Prostate gland (tissue), 2 donors: ENCODE measurements at regions of chr9 and their contacts with region 1.

Region 1: DNA sequence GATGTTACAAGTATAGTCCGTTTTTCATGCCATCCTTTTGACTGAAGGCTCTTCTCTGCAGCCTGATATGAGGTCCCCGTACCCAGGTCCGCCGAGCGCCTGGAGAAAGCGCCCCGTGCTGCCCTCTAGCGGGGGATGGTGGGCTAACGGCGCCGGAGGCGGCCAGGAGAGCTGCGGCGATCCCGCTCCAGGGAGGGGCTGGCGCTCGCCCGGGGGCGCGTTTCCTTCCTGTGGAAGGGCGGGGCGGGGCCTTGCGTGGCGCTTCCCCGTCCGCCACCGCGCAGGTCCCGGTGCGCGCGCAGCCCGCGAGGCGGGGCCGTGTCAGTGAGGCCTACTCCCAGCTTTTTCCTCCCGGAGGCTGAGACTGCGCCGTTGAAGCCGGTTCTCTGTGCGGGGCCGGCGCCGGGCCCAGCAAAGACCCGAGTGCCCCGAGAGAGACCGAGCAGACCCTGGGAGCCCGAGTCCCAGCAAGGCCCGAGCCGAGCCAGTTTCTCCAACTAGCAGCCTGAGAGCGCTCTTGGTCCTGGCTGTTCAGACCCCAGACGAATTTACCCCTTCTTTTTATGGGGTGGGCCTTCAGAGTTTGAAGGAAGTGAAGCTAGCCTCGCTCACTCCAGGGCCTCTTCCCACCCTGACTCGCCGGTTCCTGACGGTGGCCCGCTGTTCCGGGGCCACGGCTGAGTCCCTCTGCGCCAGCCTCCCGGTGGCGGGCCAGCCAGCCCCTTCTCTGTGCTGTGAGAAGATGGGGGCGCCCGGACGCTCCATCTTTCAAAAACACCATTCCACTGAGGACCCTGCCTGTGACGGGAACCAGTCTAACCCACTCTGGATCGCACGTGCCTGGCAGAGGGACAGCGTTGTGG is 9.7 kb upstream of the PHF2 start:
- DNase-seq: peak; percentile 97
- H3K4me3 ChIP-seq: peak overlapping the region; percentile 44 to 47
- H3K27ac ChIP-seq: peak overlapping the region; percentile 91 to 94
- H3K4me1 ChIP-seq: no peaks in the 10 kb centered on the region
- H3K27me3 ChIP-seq: no peaks in the 10 kb centered on the region
- CTCF ChIP-seq: peak; percentile 87 to 98 (median 98)
- POLR2A ChIP-seq: peak; percentile 95

Region 2: DNA sequence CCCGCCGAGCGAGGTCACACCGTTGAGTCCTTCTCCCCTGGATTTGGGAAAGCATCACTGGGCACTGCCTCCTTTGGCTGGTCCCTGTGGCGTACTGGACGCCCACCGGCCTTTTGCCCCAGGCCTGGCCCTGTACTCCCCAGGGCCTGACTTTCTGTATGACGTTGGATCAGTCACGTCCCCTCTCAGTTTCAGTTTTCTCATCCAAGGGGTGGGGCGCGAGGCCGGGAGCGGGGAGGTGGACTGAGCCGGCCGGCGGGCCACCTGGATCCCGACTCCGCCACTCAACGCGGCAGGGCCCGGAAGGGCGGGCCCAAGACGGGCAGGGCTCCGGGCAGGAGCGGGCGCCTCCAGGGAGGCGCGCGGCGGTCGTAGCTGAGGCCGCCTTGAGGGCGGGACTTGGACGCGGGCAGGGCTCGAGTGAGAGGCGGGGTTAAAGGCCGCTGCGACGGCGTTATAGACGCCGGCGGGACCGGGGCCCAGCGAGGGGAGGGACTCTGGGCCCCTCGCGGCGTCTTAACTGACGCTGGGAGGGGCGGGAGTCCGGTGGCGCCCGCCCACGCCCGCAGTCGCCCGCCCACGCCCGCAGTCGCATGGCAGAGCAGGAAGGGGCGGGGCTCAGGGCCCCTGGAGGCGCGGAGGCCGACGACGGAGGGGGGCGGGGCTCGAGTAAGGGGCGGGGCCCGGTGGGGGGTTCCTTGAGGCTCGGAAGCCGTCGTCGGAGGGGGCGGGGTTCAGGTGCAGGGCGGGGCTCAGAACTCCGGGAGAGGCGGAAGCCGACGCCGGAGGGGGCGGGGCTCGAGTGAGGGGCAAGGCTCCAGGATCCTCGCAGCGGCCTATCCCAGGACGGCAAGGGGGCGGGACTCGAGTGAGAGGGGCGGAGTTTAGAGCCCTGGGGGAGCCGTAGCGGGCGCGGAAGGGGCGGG is 471.2 kb before region 1 on chr9:
- intact Hi-C with region 1: loop called (anchors 10 kb)
- DNase-seq: peak; percentile 100
- H3K4me3 ChIP-seq: peak overlapping the region; percentile 98 to 99
- H3K27ac ChIP-seq: peak overlapping the region; percentile 94 to 95
- H3K4me1 ChIP-seq: peaks cover 11% of the 10 kb centered on the region
- H3K27me3 ChIP-seq: no peaks in the 10 kb centered on the region
- CTCF ChIP-seq: peak in 2 of 4 experiments; percentile 14 to 21
- POLR2A ChIP-seq: peak; percentile 76

Region 3: DNA sequence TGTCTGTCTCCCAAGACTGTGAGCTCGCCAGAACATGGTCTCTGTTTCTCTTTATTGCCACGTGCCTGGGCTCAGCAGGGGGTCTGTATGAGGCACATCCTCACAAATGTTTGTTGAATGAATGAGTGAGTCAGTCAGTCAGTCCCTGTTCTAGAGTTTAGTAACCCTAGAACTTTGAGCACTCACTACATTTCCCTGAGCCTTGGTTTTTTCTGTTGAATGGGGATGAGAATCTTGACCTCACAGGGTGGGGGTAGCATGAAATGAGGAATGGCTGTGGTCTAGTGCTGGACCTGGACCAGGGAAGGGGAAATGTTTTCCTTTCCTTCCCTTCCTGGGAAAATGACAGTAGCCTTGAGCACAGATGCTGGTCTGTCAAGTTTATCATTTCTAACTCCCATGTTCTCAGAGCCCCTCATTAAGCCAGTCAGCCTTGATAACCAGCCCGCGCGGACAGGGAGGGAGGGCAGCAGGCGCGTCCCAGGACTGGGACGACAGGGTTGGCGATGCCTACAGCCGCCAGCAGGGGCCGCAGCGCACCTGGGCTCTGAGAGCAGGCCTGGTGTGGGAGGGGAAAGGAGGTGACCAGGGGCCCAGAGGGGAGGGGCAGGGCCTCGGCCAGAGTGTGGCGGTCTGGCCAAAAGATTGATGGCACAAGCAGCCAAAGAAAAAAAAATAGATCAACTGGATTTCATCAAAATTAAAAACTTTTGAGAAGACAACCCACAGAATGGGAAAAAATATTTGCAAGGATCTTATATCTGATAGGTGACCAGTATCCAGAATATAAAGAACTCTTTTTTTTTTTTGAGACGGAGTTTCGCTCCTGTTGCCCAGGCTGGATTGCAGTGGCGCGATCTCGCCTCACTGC is 406.8 kb before region 1 on chr9:
- intact Hi-C with region 1: loop called (anchors 10 kb)
- DNase-seq: peak; percentile 81
- H3K4me3 ChIP-seq: no peak overlapping the region
- H3K27ac ChIP-seq: no peak overlapping the region
- H3K4me1 ChIP-seq: no peaks in the 10 kb centered on the region
- H3K27me3 ChIP-seq: no peaks in the 10 kb centered on the region
- CTCF ChIP-seq: peak; percentile 87 to 99 (median 94)
- POLR2A ChIP-seq: no peak

Region 4: GRCh38 chr9:93304574-93305496 is 261.8 kb before region 1 on chr9:
- intact Hi-C with region 1: loop called (anchors 5 kb)
- DNase-seq: peak; percentile 77
- H3K4me3 ChIP-seq: no peak overlapping the region
- H3K27ac ChIP-seq: peak overlapping the region in 1 of 2 donors; percentile 61
- H3K4me1 ChIP-seq: no peaks in the 10 kb centered on the region
- H3K27me3 ChIP-seq: no peaks in the 10 kb centered on the region
- CTCF ChIP-seq: peak; percentile 50 to 83 (median 74)
- POLR2A ChIP-seq: no peak

Region 5: DNA sequence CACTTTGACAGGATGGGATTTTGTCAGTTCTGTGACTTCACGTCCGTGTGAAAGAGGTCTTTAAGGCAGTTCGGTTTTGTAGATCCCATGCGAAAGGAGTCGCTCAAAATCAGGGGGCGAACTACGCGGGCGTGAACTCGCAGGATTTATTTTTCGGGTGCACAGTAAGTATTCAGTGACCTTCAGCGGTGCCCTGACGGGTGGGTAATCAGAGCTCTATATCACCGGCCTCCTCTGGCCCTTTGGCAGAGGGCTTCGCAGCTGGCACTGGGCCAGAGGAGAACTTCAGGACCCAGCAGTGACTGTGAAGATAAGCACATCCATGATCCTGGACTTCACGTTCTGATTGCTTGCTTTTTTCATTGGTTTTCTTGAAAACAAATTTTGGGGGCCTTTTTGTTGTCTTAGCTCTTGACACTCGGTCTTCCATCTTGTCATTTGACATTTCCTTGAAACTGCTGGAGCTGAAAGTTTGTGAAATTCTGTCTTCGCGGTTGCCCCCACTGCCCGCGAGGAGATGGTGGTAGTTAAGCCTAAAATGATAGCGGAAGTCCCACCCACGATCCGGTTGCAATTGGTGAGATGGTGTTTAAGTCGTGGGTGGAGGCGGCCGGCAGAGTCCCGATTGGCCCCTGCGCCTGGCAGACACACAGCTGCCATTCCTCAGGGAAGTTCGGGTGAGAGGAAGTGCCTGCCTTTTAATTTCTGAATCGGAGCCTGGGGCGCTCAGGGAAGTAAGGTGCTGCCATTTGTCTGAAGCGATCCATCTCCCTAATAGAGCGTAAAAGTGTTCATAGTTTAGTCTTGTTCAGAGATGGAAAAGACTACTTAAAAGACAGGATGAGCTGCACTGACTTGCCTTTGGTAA is 113.4 kb before region 1 on chr9 and contains the start of gene FAM120AOS:
- intact Hi-C with region 1: loop called (anchors 2 kb)
- DNase-seq: peak; percentile 96
- H3K4me3 ChIP-seq: peak within 1 kb of the TSS; percentile 79 to 84
- H3K27ac ChIP-seq: peak within 1 kb of the TSS; percentile 91 to 95
- H3K4me1 ChIP-seq: peaks cover 18% of the 10 kb centered on the region
- H3K27me3 ChIP-seq: no peaks in the 10 kb centered on the region
- CTCF ChIP-seq: no peak
- POLR2A ChIP-seq: peak; percentile 80
- total RNA-seq, gene FAM120AOS: 60.7 to 83.8 TPM